HEK293 (cell line): ENCODE measurements at regions of chr12 and their contacts with region 1.

Region 1: DNA sequence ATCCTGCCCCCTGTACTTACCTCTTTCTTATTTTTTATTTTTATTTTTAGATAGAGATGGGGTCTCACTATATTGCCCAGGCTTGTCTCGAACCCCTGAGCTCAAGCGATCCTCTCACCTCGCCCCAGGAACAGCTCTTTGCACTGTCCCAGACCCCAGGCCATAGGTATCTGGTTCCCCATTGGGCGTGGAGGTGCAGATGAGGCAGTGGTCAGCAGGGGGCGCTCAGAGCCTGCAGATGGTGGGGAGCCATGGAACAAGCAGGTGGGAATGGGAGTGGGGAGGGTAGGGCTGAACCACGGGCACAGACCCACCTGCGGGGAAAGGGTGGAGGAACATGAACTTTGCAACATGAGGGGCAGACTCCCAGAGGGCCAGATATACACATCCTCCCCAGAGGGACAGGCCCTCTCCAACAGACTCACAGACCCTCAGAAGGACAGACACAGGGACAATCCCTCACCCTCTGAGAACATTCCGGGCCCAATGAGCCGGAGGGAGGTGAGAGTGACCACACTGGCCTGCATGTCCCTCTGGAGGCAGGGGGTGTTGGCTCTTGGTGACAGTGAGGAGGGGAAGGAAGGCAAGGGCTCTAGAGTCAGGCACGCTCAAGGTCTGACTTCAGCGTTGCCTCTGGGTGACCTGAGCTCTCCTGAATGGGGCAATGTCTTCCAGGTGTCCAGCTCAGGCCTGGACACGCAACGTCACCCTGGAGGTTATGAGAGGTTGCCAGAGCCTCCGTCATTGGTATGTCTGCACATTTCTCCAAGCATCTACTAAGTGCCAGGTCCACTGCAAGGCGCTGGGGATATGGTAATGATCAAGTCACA is 34.9 kb downstream of the KRT80 start:
- H3K4me3 ChIP-seq: no peak overlapping the region
- H3K27ac ChIP-seq: no peak overlapping the region
- H3K4me1 ChIP-seq: no peaks in the 10 kb centered on the region
- CTCF ChIP-seq: peak; percentile 96

Region 2: GRCh38 chr12:52097045-52097666 is 59.8 kb before region 1 on chr12:
- CTCF ChIA-PET with region 1: no interaction called
- POLR2A ChIA-PET with region 1: no interaction called
- H3K4me3 ChIP-seq: no peak overlapping the region
- H3K27ac ChIP-seq: no peak overlapping the region
- H3K4me1 ChIP-seq: no peaks in the 10 kb centered on the region
- CTCF ChIP-seq: no peak

Region 3: GRCh38 chr12:52213512-52214420 is 56.8 kb after region 1 on chr12:
- CTCF ChIA-PET with region 1: interaction called, 18 read pairs
- POLR2A ChIA-PET with region 1: interaction called, 3 read pairs
- H3K4me3 ChIP-seq: no peak overlapping the region
- H3K27ac ChIP-seq: no peak overlapping the region
- H3K4me1 ChIP-seq: no peaks in the 10 kb centered on the region; the same call in 1 of the 2 replicates
- CTCF ChIP-seq: peak; percentile 98

Region 4: DNA sequence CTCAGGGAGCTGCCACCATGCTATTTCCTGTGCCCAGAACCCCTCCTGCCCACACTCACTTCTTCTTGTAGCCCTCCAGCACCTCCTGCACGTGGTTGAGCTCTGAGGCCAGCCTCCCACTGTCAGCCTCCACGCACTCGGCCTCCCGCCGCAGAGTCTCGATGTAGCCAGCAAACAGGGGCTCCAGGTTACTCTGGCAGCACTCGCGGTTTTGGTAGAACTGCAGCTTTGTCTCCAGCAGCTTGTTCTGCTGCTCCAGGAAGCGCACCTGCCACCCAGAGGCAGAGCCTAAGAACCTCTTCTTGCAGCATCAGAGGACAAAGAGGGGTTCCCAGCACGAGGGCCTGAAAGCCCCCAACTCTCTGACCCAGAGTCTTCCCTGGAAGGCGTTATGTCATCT is 162.1 kb after region 1 on chr12:
- CTCF ChIA-PET with region 1: interaction called, 104 read pairs
- POLR2A ChIA-PET with region 1: no interaction called
- H3K4me3 ChIP-seq: no peak overlapping the region
- H3K27ac ChIP-seq: no peak overlapping the region
- H3K4me1 ChIP-seq: no peaks in the 10 kb centered on the region
- CTCF ChIP-seq: no peak

Region 5: DNA sequence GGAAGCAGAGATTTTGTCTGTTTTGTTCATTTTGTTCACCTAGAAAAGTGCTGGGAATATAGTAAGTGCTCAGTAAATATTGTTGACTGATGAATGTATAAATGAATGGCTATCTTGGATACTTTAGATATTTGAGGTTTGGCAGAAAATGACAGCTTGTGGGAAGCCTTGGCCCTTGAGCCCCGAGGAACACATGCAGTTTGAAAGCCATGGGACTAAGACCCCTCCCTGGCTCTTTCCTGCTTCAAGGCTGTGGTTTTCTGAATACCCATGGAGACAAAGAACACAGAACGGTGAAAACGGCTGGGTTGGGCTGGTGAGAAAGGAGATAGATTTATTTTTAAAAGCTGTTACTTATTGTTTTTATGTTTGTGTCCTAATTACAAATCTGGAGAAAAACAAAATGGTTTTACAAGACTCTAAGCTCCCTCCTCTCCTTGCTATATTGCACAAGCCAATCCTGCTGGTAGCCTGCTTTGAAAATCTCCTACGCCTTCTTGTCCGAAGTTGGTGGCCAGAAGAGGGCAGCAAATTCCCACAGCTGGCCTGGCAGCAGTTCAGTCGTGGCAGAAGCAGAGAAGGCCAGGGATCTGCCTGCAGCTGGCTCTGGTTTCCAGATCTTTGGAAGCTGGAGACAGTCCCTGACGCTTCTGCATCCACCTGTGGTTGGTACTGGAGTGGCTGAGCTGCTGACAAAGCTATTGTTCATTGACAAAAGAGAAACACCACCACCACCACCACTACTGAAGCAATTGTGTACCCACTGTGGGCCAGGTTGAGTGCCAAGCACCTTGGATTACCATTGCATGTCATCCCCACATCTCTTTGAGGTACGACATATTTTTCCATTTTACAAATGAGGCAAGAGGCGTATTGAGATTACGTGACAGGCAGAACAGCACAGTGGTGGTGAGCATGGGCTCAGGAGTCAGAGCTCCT is 215.5 kb after region 1 on chr12:
- CTCF ChIA-PET with region 1: interaction called, 30 read pairs
- POLR2A ChIA-PET with region 1: no interaction called
- H3K4me3 ChIP-seq: no peak overlapping the region
- H3K27ac ChIP-seq: no peak overlapping the region
- H3K4me1 ChIP-seq: no peaks in the 10 kb centered on the region
- CTCF ChIP-seq: peak; percentile 77

Region 6: DNA sequence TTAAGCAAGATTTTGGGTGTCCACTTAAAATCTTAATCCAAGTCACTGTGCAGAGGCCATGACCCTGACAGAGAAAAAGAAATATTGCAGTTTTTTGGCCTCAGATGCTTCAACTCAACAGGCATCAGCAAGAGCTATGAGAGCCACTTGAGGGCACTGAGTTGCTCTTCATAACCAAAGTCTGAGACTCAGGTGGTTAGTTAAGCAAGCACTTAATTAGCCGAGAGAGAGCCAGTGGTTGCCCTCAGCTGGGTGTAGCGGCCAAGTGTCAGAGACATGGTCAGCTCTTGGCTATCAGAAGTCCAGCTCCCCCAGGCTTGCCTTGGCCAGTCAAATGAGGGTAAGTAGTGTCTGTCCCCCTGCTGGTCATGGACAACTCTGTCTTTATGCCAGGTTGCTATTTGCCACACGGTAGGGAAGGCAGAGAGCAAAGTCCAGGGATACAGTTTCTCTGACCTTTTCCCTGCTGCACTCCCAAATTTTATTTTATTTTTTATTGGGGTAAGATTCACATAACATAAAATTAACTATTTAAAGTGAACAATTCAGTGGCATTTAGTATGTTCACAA is 405.0 kb after region 1 on chr12:
- CTCF ChIA-PET with region 1: no interaction called
- POLR2A ChIA-PET with region 1: no interaction called
- H3K4me3 ChIP-seq: no peak overlapping the region
- H3K27ac ChIP-seq: no peak overlapping the region
- H3K4me1 ChIP-seq: no peaks in the 10 kb centered on the region
- CTCF ChIP-seq: no peak